Activated CD4-positive, alpha-beta T cell treated with anti-CD3 and anti-CD28 coated beads, Interleukin-2, amount 10 ng/mL, durations not matched to agents 24 days and 14 days (primary cell): ENCODE measurements at regions of chr17 and their contacts with region 1.

Region 1: DNA sequence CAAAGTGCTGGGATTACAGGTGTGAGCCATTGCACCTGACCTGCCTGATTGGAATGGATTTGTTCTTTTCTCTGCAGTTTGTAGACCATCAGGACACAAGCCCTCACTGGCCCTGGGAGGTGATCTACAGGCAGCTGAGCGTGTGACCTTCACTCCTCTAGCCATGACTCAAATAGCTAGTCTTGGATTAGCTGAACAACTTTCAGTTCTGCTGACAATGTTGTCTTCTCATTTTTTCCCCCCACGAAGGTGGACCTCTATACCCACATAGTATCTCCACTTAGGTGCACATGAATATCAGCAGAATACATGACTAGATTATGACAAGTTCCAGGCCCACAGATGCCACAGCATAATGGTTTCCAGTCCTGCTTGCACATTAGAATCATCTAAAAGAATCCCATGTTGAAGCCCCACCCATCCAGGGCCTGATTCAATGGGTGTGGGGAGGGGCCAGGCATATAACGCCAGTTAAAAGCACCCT is 36.8 kb downstream of the HS3ST3B1 start:
- DNase-seq: peak; percentile 58
- H3K4me3 Mint-ChIP-seq: peak overlapping the region; percentile 39
- H3K27ac Mint-ChIP-seq: peak overlapping the region; percentile 86
- H3K4me1 Mint-ChIP-seq: peaks cover 60% of the 10 kb centered on the region
- H3K27me3 Mint-ChIP-seq: no peaks in the 10 kb centered on the region

Region 2: DNA sequence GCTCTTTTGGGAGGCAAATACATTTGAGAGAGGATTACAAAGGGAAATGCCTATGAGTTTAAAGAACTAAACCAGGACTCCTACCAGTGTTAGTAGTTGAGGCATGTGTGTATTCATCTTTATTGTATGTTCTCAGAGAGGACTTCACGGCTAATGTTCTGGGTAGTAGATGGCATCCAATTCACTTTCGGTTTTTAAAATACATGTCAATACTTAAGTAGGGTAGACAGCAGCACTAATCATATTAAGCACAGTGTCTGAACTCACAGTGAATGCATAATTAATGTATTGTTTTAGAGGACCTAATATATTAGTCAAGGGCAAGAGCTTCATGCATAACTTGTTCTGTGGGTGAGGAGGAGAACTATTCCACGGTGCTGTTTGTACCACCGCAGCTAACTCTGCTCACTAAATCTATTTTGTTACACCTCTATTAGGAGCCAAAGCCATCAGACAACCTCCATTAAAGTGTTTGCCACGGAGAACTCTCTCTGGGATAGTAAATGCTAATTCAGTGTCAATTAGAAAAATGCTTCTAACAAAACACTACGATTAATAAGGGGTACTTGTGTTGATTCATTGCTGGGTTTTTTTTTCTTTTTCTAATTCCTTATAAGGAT is 212.0 kb before region 1 on chr17:
- intact Hi-C with region 1: no loop called
- DNase-seq: no peak
- H3K4me3 Mint-ChIP-seq: peak overlapping the region; percentile 13
- H3K27ac Mint-ChIP-seq: no peak overlapping the region
- H3K4me1 Mint-ChIP-seq: peaks cover 51% of the 10 kb centered on the region
- H3K27me3 Mint-ChIP-seq: no peaks in the 10 kb centered on the region

Region 3: GRCh38 chr17:14308965-14309879 is 28.4 kb before region 1 on chr17:
- intact Hi-C with region 1: loop called (anchors 1 kb)
- DNase-seq: peak; percentile 98
- H3K4me3 Mint-ChIP-seq: peak overlapping the region; percentile 82
- H3K27ac Mint-ChIP-seq: peak overlapping the region; percentile 57
- H3K4me1 Mint-ChIP-seq: peaks cover 59% of the 10 kb centered on the region
- H3K27me3 Mint-ChIP-seq: no peaks in the 10 kb centered on the region

Region 4: DNA sequence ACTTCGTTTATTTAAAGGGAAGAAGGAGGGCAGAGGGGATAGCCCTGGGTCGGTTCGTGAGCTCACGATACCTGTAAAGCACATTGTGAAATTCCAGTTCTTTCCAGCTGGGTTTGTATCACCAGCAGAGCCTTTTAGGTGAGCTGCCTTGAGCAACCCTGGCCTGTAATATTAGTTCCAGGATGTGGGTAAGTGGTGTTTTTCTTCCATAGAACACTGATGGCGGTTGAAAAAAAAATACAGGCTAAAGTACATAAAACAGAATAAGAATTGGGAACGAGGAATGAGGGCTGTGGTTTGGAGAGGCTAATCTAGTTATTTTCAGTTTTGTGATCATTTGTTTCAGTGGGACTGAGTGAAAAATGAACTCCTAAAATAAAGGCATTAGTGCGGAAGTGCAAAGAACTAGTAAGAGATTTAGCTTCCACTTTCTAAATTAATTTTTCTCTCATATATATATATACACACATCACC is 16.1 kb before region 1 on chr17:
- intact Hi-C with region 1: loop called (anchors 2 kb)
- DNase-seq: no peak
- H3K4me3 Mint-ChIP-seq: peak overlapping the region; percentile 9
- H3K27ac Mint-ChIP-seq: peak overlapping the region; percentile 51
- H3K4me1 Mint-ChIP-seq: peaks cover 50% of the 10 kb centered on the region
- H3K27me3 Mint-ChIP-seq: no peaks in the 10 kb centered on the region

Region 5: GRCh38 chr17:14427900-14428647 is 90.4 kb after region 1 on chr17:
- intact Hi-C with region 1: loop called (anchors 5 kb)
- DNase-seq: peak; percentile 85
- H3K4me3 Mint-ChIP-seq: peak overlapping the region; percentile 63
- H3K27ac Mint-ChIP-seq: peak overlapping the region; percentile 81
- H3K4me1 Mint-ChIP-seq: peaks cover 33% of the 10 kb centered on the region
- H3K27me3 Mint-ChIP-seq: no peaks in the 10 kb centered on the region

Region 6: DNA sequence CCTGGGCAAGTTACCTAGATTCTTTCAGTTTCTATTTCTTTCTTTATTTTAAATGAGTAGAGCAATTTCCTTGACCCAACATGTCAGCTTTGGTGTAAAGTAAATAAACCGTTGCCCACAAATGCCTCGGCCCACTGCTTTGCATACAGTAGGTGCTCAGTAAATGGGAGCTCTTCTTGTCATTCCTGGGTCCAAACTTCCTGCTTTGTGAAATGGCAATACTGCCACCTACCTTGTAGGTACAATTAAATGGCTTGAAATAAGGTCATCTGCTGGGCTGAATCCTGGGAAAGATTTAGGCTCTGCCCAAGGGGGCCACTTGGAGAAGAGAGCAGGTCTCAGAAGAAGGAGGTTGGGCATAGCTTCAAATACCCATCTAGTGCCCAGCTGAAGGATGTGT is 216.2 kb after region 1 on chr17:
- intact Hi-C with region 1: loop called (anchors 10 kb)
- DNase-seq: no peak
- H3K4me3 Mint-ChIP-seq: no peak overlapping the region
- H3K27ac Mint-ChIP-seq: no peak overlapping the region
- H3K4me1 Mint-ChIP-seq: no peaks in the 10 kb centered on the region
- H3K27me3 Mint-ChIP-seq: no peaks in the 10 kb centered on the region